Activated T-helper 2 cell treated with anti-CD3 and anti-CD28 coated beads, Interferon-gamma antibody, Interleukin-2, Interleukin-4, amounts not matched to agents 10 μg/mL and 5 μg/mL and 100 μg/mL, durations not matched to agents 14 hours and 24 hours and 36 hours (primary cell): ENCODE measurements at regions of chr11 and their contacts with region 1.

Region 1: DNA sequence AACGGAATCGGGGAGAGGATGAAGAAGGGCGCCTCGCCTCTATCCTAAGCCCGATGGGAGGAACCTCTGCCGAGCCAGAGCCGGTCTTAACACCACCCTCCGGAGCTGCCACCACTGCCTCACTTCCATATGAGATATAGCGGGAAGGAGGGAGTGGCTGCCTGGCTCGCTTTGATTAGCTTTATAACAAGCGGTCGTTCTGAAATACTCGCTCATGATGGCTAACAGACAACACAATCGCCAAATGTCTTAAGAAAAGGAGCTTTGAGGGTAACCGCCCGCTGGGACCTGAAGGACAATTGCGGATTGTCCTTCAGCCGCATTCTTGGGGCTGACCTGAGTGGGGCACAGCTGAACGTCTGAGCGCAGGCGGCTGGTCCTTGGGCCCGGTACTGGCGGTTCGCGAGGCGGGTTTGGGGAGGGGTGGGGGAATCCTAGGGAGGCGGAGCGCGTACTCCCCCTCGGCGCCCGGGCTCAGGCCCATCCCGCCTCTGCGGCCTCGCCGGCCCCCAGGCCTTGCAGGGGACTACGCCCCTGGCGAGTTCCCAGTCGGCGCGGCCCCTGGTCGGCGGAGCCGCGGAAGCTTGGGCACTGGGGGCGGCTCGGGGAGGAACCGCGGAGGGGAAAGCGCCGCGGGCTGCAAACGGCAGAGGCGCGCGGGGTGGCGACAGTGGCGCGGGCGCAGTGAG is at the start of gene PLAAT5:
- DNase-seq: no peak
- H3K4me3 Mint-ChIP-seq: peak within 1 kb of the TSS; percentile 83
- H3K27ac Mint-ChIP-seq: peak within 1 kb of the TSS; percentile 78
- H3K4me1 Mint-ChIP-seq: peaks cover 28% of the 10 kb centered on the region
- H3K27me3 Mint-ChIP-seq: peaks cover 64% of the 10 kb centered on the region
- total RNA-seq, gene PLAAT5: 0.64 and 0.80 TPM in 2 replicates

Region 2: DNA sequence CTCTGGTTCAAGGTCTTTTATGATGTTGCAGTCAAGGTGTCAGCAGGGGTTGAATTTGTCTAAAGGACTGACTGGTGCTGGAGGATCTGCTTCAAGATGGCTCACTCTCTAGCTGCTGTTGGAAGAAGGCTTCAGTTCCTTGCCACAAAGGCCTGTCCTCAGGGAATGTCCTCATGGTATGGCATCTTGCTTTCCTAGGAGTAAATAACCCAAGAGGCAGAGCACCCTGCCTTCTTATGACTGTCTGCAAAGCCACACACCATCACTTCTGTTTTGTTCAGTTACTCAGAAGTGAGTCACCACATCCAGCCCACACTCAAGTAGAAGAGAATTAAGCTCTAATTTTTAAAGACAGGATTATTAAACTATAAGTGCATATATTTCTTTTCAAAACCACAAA is 45.0 kb before region 1 on chr11:
- intact Hi-C with region 1: loop called (anchors 5 kb)
- DNase-seq: no peak
- H3K4me3 Mint-ChIP-seq: no peak overlapping the region
- H3K27ac Mint-ChIP-seq: peak overlapping the region; percentile 60
- H3K4me1 Mint-ChIP-seq: peaks cover 41% of the 10 kb centered on the region
- H3K27me3 Mint-ChIP-seq: peaks cover 7% of the 10 kb centered on the region

Region 3: DNA sequence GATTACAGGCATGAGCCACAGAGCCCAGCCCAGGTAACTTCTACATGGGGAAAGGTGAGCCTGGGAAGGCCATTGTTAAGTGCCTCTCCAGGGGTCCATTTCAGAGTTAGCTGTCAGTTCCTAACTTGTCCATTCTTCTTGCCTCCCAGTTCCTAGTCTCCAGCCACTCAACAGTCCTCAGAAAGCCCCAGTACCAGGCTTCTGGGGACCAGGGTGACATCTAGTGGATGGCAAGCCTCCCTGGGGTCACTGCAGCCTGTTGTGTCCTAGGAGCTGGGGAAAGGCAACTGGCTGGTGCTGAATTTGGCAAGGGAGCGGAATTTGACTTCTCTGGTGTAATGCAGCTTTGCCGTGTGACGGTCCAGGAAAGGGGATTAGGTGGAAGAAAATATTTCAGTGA is 17.3 kb after region 1 on chr11:
- intact Hi-C with region 1: no loop called
- DNase-seq: no peak
- H3K4me3 Mint-ChIP-seq: no peak overlapping the region
- H3K27ac Mint-ChIP-seq: no peak overlapping the region
- H3K4me1 Mint-ChIP-seq: peaks cover 8% of the 10 kb centered on the region
- H3K27me3 Mint-ChIP-seq: peaks cover 8% of the 10 kb centered on the region

Region 4: DNA sequence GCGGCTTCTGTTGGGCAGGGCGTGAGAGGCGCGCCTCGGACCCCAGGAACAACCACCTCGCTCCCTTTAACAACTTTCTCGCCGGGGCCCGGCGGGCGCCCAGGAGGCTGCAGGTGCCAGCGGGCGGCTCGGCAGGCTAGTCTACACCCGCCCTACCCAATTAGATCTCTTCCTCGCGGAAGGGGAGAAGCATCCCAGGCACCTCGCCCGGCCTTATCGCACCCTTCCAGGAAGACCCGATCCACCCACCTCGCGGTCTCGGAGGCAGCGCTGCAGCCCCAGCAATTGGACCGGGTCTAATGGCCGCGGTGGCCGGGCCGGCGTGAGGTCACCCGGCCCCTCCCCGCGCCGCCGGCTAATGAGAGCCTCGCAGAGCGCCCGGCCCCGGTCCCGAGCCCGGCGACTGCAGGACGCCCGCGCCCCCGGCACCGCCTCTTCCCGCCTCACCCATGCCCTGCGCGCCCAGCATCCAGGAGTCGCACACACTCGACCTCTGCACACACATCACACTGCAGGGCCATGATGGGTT is 123.5 kb after region 1 on chr11 and contains the start of gene PLAAT3:
- intact Hi-C with region 1: loop called (anchors 5 kb)
- DNase-seq: no peak
- H3K4me3 Mint-ChIP-seq: peak within 1 kb of the TSS; percentile 77
- H3K27ac Mint-ChIP-seq: no peak within 1 kb of the TSS
- H3K4me1 Mint-ChIP-seq: peaks cover 9% of the 10 kb centered on the region
- H3K27me3 Mint-ChIP-seq: peaks cover 27% of the 10 kb centered on the region
- total RNA-seq, gene PLAAT3: 15.2 and 17.3 TPM in 2 replicates